ENCODE measurements at regions of chr17 and their contacts with region 1.

Region 1: GRCh38 chr17:20103454-20104446 is 94.6 kb downstream of the SPECC1 start:
- DNase-seq: no peak
- ATAC-seq: no peak
- H3K4me3 ChIP-seq: no peak overlapping the region
- H3K27ac ChIP-seq: no peak overlapping the region
- H3K4me1 ChIP-seq: no peaks in the 10 kb centered on the region
- H3K27me3 ChIP-seq: no peaks in the 10 kb centered on the region
- CTCF ChIP-seq: no peak
- POLR2A ChIP-seq: no peak

Region 2: GRCh38 chr17:19904924-19905323 is 198.8 kb before region 1 on chr17:
- intact Hi-C with region 1: no loop called
- DNase-seq: peak; percentile 66 to 75 (median 74)
- ATAC-seq: peak; percentile 52 to 69 (median 56)
- H3K4me3 ChIP-seq: no peak overlapping the region
- H3K27ac ChIP-seq: peak overlapping the region in 2 of 3 donors; percentile 43 to 54
- H3K4me1 ChIP-seq: peaks cover 0 to 32% (median 6%) of the 10 kb centered on the region in 4 donors
- H3K27me3 ChIP-seq: no peaks in the 10 kb centered on the region
- CTCF ChIP-seq: no peak
- POLR2A ChIP-seq: no peak

Region 3: GRCh38 chr17:19992803-19993713 is 110.7 kb before region 1 on chr17:
- intact Hi-C with region 1: loop called in 1 of 2 experiments (anchors 10 kb)
- DNase-seq: peak; percentile 90 to 92 (median 91)
- ATAC-seq: peak; percentile 100
- H3K4me3 ChIP-seq: no peak overlapping the region
- H3K27ac ChIP-seq: no peak overlapping the region
- H3K4me1 ChIP-seq: no peaks in the 10 kb centered on the region
- H3K27me3 ChIP-seq: no peaks in the 10 kb centered on the region
- CTCF ChIP-seq: peak; percentile 71 to 79 (median 79)
- POLR2A ChIP-seq: no peak

Region 4: GRCh38 chr17:20174588-20175265 is 71.0 kb after region 1 on chr17:
- intact Hi-C with region 1: no loop called
- DNase-seq: no peak
- ATAC-seq: no peak
- H3K4me3 ChIP-seq: no peak overlapping the region
- H3K27ac ChIP-seq: no peak overlapping the region
- H3K4me1 ChIP-seq: no peaks in the 10 kb centered on the region
- H3K27me3 ChIP-seq: no peaks in the 10 kb centered on the region
- CTCF ChIP-seq: no peak
- POLR2A ChIP-seq: no peak